Activated naive CD4-positive, alpha-beta T cell treated with anti-CD3 and anti-CD28 coated beads, Interleukin-2, amount 10 ng/mL, durations not matched to agents 7 days and 5 days (primary cell): ENCODE measurements at regions of chr18 and their contacts with region 1.

Region 1: DNA sequence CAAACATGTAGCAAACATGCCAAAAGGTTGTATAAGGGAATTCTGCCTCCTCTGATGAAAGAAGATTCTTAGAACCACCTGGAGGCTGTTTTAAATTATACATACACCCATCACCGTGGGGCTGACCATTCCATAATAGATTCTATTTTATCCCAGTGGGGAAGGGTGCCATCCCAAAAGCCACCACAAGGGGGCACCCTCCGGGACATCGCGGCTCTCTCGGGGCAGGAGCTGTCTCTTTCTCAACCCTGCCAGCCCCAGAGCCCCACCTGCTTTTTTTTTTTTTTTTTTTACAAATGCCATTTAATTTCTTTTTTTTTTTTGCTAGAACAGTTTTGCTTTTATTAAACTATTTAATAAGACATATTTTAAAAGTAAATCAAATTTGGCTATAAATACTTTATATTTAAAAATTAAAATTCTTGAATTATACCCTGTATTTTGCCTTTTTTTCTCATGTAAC is 8.6 kb upstream of the MTCL1 start:
- DNase-seq: peak; percentile 77
- H3K4me3 Mint-ChIP-seq: no peak overlapping the region
- H3K27ac Mint-ChIP-seq: no peak overlapping the region
- H3K4me1 Mint-ChIP-seq: no peaks in the 10 kb centered on the region
- H3K27me3 Mint-ChIP-seq: peaks cover 29% of the 10 kb centered on the region

Region 2: DNA sequence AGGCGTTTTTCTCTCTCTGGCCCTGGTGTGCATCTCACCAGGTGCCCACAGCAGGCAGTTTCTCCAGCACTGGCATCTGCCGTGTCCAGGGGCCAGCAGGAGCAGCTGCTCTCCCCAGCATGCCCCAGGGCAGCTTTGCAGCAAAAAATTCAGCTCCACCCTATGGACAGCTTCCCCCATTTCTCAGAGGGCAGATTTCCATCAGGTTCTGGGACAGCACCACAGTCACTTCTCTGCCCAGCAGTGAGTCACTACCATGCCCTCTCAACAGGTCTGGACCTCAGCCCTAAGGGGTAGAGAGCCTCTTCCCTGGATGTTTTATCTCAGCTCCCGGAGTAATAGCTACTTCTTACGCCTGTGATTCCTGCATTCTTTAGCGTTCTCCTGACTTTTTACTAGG is 257.7 kb before region 1 on chr18:
- CTCF ChIA-PET with region 1: no interaction called
- DNase-seq: no peak
- H3K4me3 Mint-ChIP-seq: no peak overlapping the region
- H3K27ac Mint-ChIP-seq: no peak overlapping the region
- H3K4me1 Mint-ChIP-seq: no peaks in the 10 kb centered on the region
- H3K27me3 Mint-ChIP-seq: no peaks in the 10 kb centered on the region

Region 3: GRCh38 chr18:8982416-8983184 is 285.8 kb after region 1 on chr18:
- CTCF ChIA-PET with region 1: interaction called, 19 read pairs
- DNase-seq: peak; percentile 49
- H3K4me3 Mint-ChIP-seq: no peak overlapping the region
- H3K27ac Mint-ChIP-seq: no peak overlapping the region
- H3K4me1 Mint-ChIP-seq: no peaks in the 10 kb centered on the region
- H3K27me3 Mint-ChIP-seq: peaks cover 30% of the 10 kb centered on the region

Region 4: GRCh38 chr18:8988261-8988871 is 291.6 kb after region 1 on chr18:
- CTCF ChIA-PET with region 1: interaction called, 19 read pairs
- DNase-seq: peak; percentile 67
- H3K4me3 Mint-ChIP-seq: no peak overlapping the region
- H3K27ac Mint-ChIP-seq: no peak overlapping the region
- H3K4me1 Mint-ChIP-seq: no peaks in the 10 kb centered on the region
- H3K27me3 Mint-ChIP-seq: peaks cover 32% of the 10 kb centered on the region